GM12878 (cell line): ENCODE measurements at regions of chr6 and their contacts with region 1.

Region 1: GRCh38 chr6:92231220-92231701 is 1188.1 kb downstream of the EPHA7 start:
- DNase-seq: no peak
- ATAC-seq: peak; percentile 94
- H3K4me3 ChIP-seq: no peak overlapping the region
- H3K27ac ChIP-seq: no peak overlapping the region
- H3K4me1 ChIP-seq: no peaks in the 10 kb centered on the region
- H3K27me3 ChIP-seq: no peaks in the 10 kb centered on the region
- CTCF ChIP-seq: no peak
- EP300 ChIP-seq: peak; percentile 71 to 91; a peak in 3 of 4 replicates
- POLR2A ChIP-seq: no peak
- RAD21 ChIP-seq: no peak

Region 2: GRCh38 chr6:92011681-92012245 is 219.5 kb before region 1 on chr6:
- CTCF ChIA-PET with region 1: no interaction called
- POLR2A ChIA-PET with region 1: no interaction called
- RAD21 ChIA-PET with region 1: no interaction called
- SMC1A ChIA-PET with region 1: no interaction called
- in situ Hi-C with region 1: no loop called
- intact Hi-C with region 1: no loop called
- DNase-seq: no peak
- ATAC-seq: no peak
- H3K4me3 ChIP-seq: no peak overlapping the region
- H3K27ac ChIP-seq: no peak overlapping the region
- H3K4me1 ChIP-seq: no peaks in the 10 kb centered on the region
- H3K27me3 ChIP-seq: no peaks in the 10 kb centered on the region
- CTCF ChIP-seq: no peak
- EP300 ChIP-seq: no peak
- POLR2A ChIP-seq: no peak
- RAD21 ChIP-seq: no peak

Region 3: GRCh38 chr6:92216717-92217116 is 14.5 kb before region 1 on chr6:
- CTCF ChIA-PET with region 1: no interaction called
- POLR2A ChIA-PET with region 1: interaction called, 6 read pairs
- RAD21 ChIA-PET with region 1: interaction called, 9 read pairs
- SMC1A ChIA-PET with region 1: interaction called, 17 read pairs
- in situ Hi-C with region 1: no loop called
- intact Hi-C with region 1: no loop called
- DNase-seq: no peak
- ATAC-seq: no peak
- H3K4me3 ChIP-seq: no peak overlapping the region
- H3K27ac ChIP-seq: no peak overlapping the region
- H3K4me1 ChIP-seq: no peaks in the 10 kb centered on the region
- H3K27me3 ChIP-seq: no peaks in the 10 kb centered on the region
- CTCF ChIP-seq: no peak
- EP300 ChIP-seq: no peak
- POLR2A ChIP-seq: no peak
- RAD21 ChIP-seq: no peak

Region 4: GRCh38 chr6:92243315-92243714 is 12.1 kb after region 1 on chr6:
- CTCF ChIA-PET with region 1: interaction called, 4 read pairs
- POLR2A ChIA-PET with region 1: interaction called, 6 read pairs
- RAD21 ChIA-PET with region 1: interaction called, 5 read pairs
- SMC1A ChIA-PET with region 1: interaction called, 23 read pairs
- in situ Hi-C with region 1: no loop called
- intact Hi-C with region 1: no loop called
- DNase-seq: no peak
- ATAC-seq: peak; percentile 34; the same call in 2 of the 3 replicates
- H3K4me3 ChIP-seq: no peak overlapping the region
- H3K27ac ChIP-seq: no peak overlapping the region
- H3K4me1 ChIP-seq: no peaks in the 10 kb centered on the region
- H3K27me3 ChIP-seq: no peaks in the 10 kb centered on the region
- CTCF ChIP-seq: no peak
- EP300 ChIP-seq: peak; percentile 24 to 39; a peak in 1 of 4 replicates
- POLR2A ChIP-seq: no peak
- RAD21 ChIP-seq: no peak

Region 5: DNA sequence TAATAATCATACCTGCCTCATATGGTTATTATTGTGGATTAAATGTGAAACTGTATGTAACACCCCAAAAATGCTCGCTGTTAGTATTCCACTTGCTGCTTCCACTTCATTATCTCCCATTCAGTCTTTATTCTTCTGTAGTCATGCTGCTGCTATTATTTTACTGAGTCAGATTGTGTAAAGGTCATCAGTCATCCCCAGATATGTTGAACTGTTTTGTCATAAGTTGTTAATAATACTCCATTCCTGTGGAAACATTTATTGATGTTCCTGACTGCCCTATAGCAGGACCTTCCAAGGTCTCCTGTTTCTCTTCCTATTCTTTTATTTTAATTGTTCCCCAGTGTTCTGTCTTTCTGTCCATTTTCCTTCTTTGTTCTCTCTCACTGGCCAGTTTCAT is 39.8 kb after region 1 on chr6:
- CTCF ChIA-PET with region 1: no interaction called
- POLR2A ChIA-PET with region 1: no interaction called
- RAD21 ChIA-PET with region 1: no interaction called
- SMC1A ChIA-PET with region 1: no interaction called
- in situ Hi-C with region 1: no loop called
- intact Hi-C with region 1: no loop called
- DNase-seq: no peak
- ATAC-seq: no peak
- H3K4me3 ChIP-seq: no peak overlapping the region
- H3K27ac ChIP-seq: no peak overlapping the region
- H3K4me1 ChIP-seq: no peaks in the 10 kb centered on the region
- H3K27me3 ChIP-seq: no peaks in the 10 kb centered on the region
- CTCF ChIP-seq: no peak
- EP300 ChIP-seq: no peak
- POLR2A ChIP-seq: no peak
- RAD21 ChIP-seq: no peak